ENCODE measurements at regions of chr1 and their contacts with region 1.

Region 1: GRCh38 chr1:183871142-183871541 is 66.2 kb downstream of the RGL1 start:
- DNase-seq: peak in 1 of 10 donors; percentile 37
- H3K4me3 ChIP-seq: peak overlapping the region in 18 of 59 donors; percentile 1 to 42 (median 20)
- H3K27ac ChIP-seq: peak overlapping the region; percentile 65 to 98 (median 94)
- H3K27me3 ChIP-seq: no peaks in the 10 kb centered on the region
- CTCF ChIP-seq: no peak

Region 2: DNA sequence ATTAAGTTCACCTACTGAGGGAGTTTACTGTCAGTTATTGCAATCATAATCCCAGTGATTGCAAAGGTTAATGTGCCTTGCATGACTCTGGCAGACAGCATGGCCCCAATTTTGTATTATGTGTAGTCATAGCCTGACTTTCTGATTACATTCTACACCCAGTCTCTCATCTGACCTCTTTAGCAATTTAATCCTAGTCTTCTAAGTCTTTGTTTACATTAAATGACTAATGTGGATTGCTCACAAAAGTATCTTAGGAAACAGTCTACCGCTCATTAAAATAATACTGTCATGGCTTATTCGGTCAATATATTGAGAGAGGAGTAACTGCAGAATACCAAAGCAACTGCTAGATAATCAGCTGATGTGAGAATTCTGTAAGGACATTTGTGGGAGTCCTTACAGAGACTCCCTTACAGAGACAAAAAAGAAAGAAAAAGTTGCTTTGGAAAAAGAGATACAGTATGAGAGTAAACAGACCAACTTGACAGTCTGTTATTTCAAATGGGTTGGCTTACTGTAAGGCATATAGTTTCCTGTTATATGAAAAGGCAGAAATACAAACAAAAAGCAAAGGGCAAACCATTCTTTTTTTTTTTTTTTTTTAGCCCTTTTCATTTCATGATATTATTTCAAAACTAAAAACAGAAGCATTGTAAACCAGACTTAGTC is 356.0 kb before region 1 on chr1:
- intact Hi-C with region 1: no loop called
- DNase-seq: no peak
- H3K4me3 ChIP-seq: no peak overlapping the region
- H3K27ac ChIP-seq: no peak overlapping the region
- H3K27me3 ChIP-seq: no peaks in the 10 kb centered on the region
- CTCF ChIP-seq: no peak

Region 3: GRCh38 chr1:183837062-183837461 is 34.1 kb before region 1 on chr1:
- intact Hi-C with region 1: loop called in 1 of 2 experiments (anchors 5 kb)
- DNase-seq: no peak
- H3K4me3 ChIP-seq: no peak overlapping the region
- H3K27ac ChIP-seq: peak overlapping the region in 14 of 59 donors; percentile 2 to 90 (median 31)
- H3K27me3 ChIP-seq: no peaks in the 10 kb centered on the region
- CTCF ChIP-seq: no peak